ENCODE measurements at regions of chr2 and their contacts with region 1.

Region 1: GRCh38 chr2:27281855-27282559 is at the start of gene TRIM54:
- DNase-seq: no peak
- ATAC-seq: no peak
- H3K4me3 Mint-ChIP-seq: no peak within 1 kb of the TSS
- H3K27ac Mint-ChIP-seq: no peak within 1 kb of the TSS
- H3K4me1 Mint-ChIP-seq: peaks cover 10% of the 10 kb centered on the region
- H3K27me3 Mint-ChIP-seq: peaks cover 52% of the 10 kb centered on the region
- total RNA-seq, gene TRIM54: 0.28 TPM in 1 of 2 experiments, not detected in the other

Region 2: GRCh38 chr2:27086090-27086723 is 195.8 kb before region 1 on chr2:
- CTCF ChIA-PET with region 1: interaction called, 22 read pairs
- DNase-seq: peak; percentile 97
- ATAC-seq: peak; percentile 91
- H3K4me3 Mint-ChIP-seq: peak overlapping the region; percentile 78
- H3K27ac Mint-ChIP-seq: peak overlapping the region; percentile 85
- H3K4me1 Mint-ChIP-seq: peaks cover 31% of the 10 kb centered on the region
- H3K27me3 Mint-ChIP-seq: no peaks in the 10 kb centered on the region

Region 3: DNA sequence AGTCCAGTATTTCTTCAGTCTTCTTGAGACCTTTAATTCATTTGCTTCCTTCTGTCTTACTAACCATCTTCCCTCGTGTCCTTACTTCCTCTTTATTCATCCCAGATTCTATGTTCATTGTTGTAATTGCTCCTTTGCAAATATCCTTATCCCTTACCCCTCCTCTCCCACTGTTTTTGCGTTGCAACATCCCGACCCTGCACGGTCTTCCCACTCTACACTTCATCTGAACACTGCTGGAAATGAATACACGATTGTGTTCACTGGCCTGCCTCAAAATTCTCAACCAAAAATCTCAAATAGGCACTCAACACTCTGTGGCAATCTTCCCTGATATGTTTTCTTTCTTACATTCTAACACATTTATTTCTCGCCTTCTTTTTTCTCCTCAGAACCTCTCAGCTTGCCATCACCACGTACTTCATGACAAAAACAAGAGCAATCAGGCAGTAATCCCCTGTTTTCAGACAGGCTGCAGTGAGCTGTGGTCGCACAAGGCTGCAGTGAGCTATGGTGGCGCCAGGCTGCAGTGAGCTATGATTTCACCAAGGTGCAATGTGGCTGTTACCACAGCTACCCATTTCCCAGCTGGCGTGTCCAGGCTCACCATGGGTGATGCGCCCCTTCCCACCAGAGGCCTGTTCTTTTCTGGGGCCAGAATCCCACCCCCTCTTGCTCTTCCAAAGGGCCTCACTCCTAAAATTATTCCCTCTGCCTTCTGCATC is 107.5 kb before region 1 on chr2:
- CTCF ChIA-PET with region 1: interaction called, 24 read pairs
- DNase-seq: no peak
- ATAC-seq: no peak
- H3K4me3 Mint-ChIP-seq: no peak overlapping the region
- H3K27ac Mint-ChIP-seq: no peak overlapping the region
- H3K4me1 Mint-ChIP-seq: peaks cover 2% of the 10 kb centered on the region
- H3K27me3 Mint-ChIP-seq: peaks cover 32% of the 10 kb centered on the region

Region 4: DNA sequence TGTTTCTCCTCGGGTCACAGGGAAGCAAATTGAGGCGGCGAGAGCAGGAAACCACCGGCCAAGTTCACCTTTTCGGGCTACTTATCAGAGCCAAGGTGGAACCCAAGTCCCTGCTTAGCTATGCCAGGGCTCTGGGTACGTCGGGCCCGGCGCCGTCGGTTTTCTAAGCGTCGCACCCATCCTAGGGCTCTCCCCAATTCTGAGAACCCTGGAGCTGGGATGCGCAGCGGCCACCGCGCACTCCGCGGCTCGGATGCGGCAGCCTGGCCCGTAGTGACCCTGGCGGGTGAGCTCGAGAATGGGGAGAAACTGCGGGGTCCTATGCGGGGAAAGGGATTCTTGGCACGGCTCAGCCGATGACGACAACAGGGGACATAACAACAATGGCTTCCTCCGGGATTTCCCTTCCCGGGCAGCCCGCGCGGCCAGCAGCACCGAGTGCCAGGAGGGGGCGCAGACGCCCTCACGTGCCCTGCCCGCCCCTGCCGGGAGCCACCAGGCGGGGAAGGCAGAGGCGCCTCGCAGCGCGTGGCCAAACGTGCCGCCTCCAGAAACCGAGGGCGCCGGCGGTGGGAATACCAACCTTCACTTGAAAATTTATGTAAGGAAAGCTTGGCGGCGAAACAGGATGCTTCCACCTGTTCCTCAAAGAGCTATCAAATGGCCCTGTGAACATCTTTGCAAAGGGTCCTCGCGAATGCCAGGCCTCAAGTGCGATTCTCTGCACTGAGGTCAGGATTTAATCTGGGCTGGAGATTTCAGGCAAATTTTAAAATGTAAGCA is 17.1 kb before region 1 on chr2:
- CTCF ChIA-PET with region 1: interaction called, 65 read pairs
- DNase-seq: peak; percentile 57
- ATAC-seq: peak; percentile 14
- H3K4me3 Mint-ChIP-seq: peak overlapping the region; percentile 19
- H3K27ac Mint-ChIP-seq: no peak overlapping the region
- H3K4me1 Mint-ChIP-seq: peaks cover 22% of the 10 kb centered on the region
- H3K27me3 Mint-ChIP-seq: peaks cover 45% of the 10 kb centered on the region

Region 5: GRCh38 chr2:27303093-27304025 is 21.4 kb after region 1 on chr2:
- CTCF ChIA-PET with region 1: interaction called, 28 read pairs
- DNase-seq: peak; percentile 57
- ATAC-seq: peak; percentile 63
- H3K4me3 Mint-ChIP-seq: peak overlapping the region; percentile 54
- H3K27ac Mint-ChIP-seq: peak overlapping the region; percentile 28
- H3K4me1 Mint-ChIP-seq: peaks cover 8% of the 10 kb centered on the region
- H3K27me3 Mint-ChIP-seq: peaks cover 24% of the 10 kb centered on the region